ENCODE measurements at regions of chr4 and their contacts with region 1.

Region 1: GRCh38 chr4:185183619-185184281 is 20.1 kb downstream of the CFAP97 start:
- DNase-seq: no peak
- H3K4me3 ChIP-seq: no peak overlapping the region
- CTCF ChIP-seq: peak; percentile 75

Region 2: GRCh38 chr4:185005216-185005819 is 178.4 kb before region 1 on chr4:
- CTCF ChIA-PET with region 1: interaction called, 10 read pairs
- POLR2A ChIA-PET with region 1: no interaction called
- DNase-seq: no peak
- H3K4me3 ChIP-seq: no peak overlapping the region; the same call in 1 of the 2 replicates
- CTCF ChIP-seq: peak; percentile 93

Region 3: DNA sequence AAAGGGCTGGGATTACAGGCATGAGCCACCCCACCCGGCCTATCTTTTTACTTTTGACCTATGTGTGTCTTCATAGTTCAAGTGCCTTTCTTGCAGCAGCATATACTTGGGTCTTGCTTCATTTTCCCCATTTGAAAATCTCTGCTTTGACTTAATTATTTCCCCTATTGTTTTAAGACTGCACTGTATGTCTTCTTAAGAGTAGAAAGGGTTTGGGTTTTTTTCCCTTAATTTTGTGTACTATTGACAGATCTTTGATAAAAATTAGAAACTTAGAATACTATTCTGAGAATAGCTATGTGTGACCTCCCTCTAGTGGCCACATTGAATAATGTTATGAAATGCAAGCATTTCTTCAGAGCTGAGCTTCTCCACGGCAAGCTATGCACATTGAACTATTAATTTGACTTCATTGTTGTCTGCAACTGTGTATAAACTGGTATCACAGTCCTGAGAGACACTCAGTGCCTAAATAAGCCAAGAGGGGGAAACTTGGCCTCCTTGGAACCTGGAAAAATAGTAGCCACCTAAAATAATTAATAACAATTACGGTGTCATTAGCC is 49.4 kb before region 1 on chr4:
- CTCF ChIA-PET with region 1: interaction called, 14 read pairs
- POLR2A ChIA-PET with region 1: no interaction called
- DNase-seq: no peak
- H3K4me3 ChIP-seq: no peak overlapping the region
- CTCF ChIP-seq: peak; percentile 34

Region 4: DNA sequence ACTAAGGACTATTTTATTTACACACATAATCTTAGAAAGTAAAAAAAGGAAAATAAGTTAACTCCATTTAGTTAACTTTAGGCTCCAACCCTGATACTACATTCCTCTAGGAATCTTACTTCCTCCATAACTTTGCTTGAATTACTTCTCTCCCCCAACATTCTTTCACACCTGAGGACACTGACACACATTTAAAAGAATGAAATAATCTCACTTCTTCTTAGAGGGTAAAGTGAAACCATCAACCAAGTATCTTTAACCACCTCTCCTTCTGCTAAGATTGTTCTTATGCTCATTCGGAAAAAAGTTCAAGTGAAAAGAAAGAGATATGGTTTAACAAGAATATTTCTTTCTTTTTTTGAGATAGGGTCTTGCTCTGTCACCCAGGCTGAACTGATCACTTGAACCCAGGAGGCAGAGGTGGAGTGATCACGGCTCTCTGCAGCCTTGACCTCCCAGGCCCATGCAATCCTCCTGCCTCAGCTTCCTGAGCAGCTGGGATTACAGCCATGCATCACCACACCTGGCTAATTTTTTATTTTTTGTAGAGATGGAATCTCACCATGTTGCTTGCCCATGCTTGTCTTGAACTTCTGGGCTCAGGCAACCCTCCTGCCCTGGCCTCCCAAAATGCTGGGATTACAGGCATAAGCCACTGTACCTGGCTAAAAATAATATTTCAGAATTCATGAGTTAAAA is 12.2 kb before region 1 on chr4:
- CTCF ChIA-PET with region 1: interaction called, 71 read pairs
- POLR2A ChIA-PET with region 1: no interaction called
- DNase-seq: no peak
- H3K4me3 ChIP-seq: no peak overlapping the region
- CTCF ChIP-seq: no peak

Region 5: GRCh38 chr4:185395956-185396723 is 212.4 kb after region 1 on chr4:
- CTCF ChIA-PET with region 1: interaction called, 28 read pairs
- POLR2A ChIA-PET with region 1: no interaction called
- DNase-seq: peak; percentile 88
- H3K4me3 ChIP-seq: peak overlapping the region; percentile 76
- CTCF ChIP-seq: no peak